ENCODE measurements at regions of chr5 and their contacts with region 1.

Region 1: GRCh38 chr5:141664732-141665461 is 13.7 kb upstream of the FCHSD1 start:
- DNase-seq: peak; percentile 75
- ATAC-seq: peak; percentile 96
- H3K4me3 Mint-ChIP-seq: no peak overlapping the region
- H3K27ac Mint-ChIP-seq: no peak overlapping the region
- H3K4me1 Mint-ChIP-seq: peaks cover 4% of the 10 kb centered on the region
- H3K27me3 Mint-ChIP-seq: peaks cover 4% of the 10 kb centered on the region
- CTCF ChIP-seq: peak; percentile 93

Region 2: GRCh38 chr5:141923448-141924352 is 258.8 kb after region 1 on chr5 and contains the start of gene DELE1:
- CTCF ChIA-PET with region 1: no interaction called
- POLR2A ChIA-PET with region 1: no interaction called
- intact Hi-C with region 1: loop called (anchors 1 kb)
- DNase-seq: peak; percentile 84
- ATAC-seq: peak; percentile 96
- H3K4me3 Mint-ChIP-seq: peak within 1 kb of the TSS; percentile 91
- H3K27ac Mint-ChIP-seq: peak within 1 kb of the TSS; percentile 95
- H3K4me1 Mint-ChIP-seq: peaks cover 23% of the 10 kb centered on the region
- H3K27me3 Mint-ChIP-seq: no peaks in the 10 kb centered on the region
- CTCF ChIP-seq: no peak
- total RNA-seq, gene DELE1: 95.0 and 114 TPM in 2 replicates

Region 3: DNA sequence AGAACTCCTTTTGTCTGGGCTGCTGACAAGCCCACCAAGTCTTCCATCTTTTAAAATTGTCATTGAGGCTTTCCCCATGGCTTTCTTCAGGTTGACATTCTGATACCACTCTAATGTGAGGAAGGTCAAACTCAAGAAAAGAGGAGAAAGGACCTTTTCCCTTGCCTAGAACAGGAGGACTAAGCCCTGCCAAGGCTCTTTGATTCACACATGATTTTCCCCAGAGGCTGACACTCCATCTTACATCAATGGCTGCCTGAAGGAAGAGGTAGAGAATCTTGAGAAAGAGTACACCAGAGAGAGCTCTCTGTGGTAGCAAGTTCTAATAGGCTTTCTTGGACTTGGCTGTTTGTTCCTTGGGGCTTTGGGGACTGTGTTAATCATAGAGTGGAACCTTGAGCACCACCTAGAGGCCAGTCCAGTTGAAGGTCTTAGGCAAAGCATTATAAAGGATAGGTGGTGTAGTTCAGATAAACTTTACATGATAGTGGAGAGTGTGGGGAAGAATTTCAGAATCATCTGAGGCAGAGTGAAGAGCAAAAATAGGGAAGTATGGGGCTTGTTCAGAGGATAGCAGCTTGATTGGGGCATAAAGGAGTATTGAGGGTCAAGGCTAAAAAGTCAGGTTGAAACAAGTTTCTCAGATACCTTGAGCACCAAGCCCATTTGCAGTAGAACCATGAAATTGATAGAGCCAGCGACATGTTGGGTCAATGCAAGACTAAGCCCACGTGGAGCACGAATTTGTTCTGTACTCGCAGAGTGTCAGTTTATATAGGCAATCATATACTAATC is 480.4 kb after region 1 on chr5:
- CTCF ChIA-PET with region 1: interaction called, 5 read pairs
- POLR2A ChIA-PET with region 1: no interaction called
- intact Hi-C with region 1: loop called (anchors 1 kb)
- DNase-seq: no peak
- ATAC-seq: peak; percentile 86
- H3K4me3 Mint-ChIP-seq: no peak overlapping the region
- H3K27ac Mint-ChIP-seq: no peak overlapping the region
- H3K4me1 Mint-ChIP-seq: no peaks in the 10 kb centered on the region
- H3K27me3 Mint-ChIP-seq: no peaks in the 10 kb centered on the region
- CTCF ChIP-seq: peak; percentile 78